ENCODE measurements at regions of chr2 and their contacts with region 1.

Region 1: DNA sequence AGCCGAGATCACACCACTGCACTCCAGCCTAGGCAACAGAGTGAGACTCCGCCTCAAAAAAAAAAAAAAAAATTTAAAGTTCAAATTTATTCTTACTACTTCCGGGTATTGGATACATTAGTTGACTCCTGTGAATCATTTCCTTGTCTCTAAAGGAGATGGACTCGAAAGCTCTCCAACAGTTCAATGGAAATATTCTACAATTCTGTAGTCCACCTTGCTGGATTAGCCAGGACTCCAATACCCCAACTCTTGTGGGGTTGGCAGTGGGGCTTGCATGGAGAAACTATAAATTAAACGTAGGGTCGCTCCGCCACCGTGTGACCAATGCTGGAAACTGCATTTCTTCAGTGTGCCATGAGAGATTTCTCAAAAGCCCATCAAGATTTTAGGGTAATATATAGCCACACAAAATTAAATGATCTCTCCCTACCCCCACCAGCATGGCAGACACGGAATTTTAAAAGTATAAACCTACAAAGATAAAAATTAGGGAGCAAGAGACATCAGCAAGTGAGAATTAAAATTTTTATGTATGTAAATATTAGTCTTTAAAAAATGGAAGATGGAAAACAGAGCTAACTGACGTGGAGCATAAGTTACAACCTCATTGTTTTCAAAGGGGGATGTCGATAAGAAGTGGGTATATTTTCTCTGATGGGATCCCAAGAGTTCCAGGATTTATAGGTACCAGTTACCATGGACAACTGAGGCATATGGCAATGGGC is 27.8 kb upstream of the GAREM2 start:
- DNase-seq: peak; percentile 82
- H3K4me3 ChIP-seq: no peak overlapping the region
- H3K27ac ChIP-seq: peak overlapping the region; percentile 77
- H3K4me1 ChIP-seq: peaks cover 8% of the 10 kb centered on the region
- H3K27me3 ChIP-seq: no peaks in the 10 kb centered on the region
- CTCF ChIP-seq: peak; percentile 75

Region 2: GRCh38 chr2:25851740-25852503 is 293.2 kb before region 1 on chr2:
- intact Hi-C with region 1: loop called (anchors 10 kb)
- DNase-seq: peak; percentile 29
- H3K4me3 ChIP-seq: no peak overlapping the region
- H3K27ac ChIP-seq: no peak overlapping the region
- H3K4me1 ChIP-seq: no peaks in the 10 kb centered on the region
- H3K27me3 ChIP-seq: no peaks in the 10 kb centered on the region
- CTCF ChIP-seq: peak; percentile 67

Region 3: DNA sequence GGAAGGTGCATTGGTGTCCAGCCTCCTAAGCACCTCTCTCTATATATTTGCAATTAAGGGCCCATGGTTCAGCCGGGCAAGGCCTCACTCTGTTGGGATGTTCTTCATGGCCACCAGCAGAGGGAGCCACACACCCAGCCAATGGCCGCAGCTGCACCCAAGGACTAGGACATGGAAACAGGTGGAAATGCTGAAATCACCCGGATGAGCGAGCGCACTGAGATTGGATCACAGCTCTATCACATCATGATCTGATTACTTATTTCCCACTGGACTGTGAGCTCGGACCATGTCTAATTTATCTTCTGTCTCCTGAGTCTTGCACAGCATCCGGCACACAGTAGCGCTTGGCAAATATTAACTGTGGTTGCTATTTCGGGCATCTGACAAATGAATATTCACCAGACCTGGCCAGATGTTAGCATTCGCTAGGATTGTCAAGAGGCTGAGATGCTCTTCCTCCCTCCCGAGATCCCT is 194.0 kb before region 1 on chr2:
- intact Hi-C with region 1: loop called (anchors 5 kb)
- DNase-seq: peak; percentile 82
- H3K4me3 ChIP-seq: no peak overlapping the region
- H3K27ac ChIP-seq: no peak overlapping the region
- H3K4me1 ChIP-seq: no peaks in the 10 kb centered on the region
- H3K27me3 ChIP-seq: no peaks in the 10 kb centered on the region
- CTCF ChIP-seq: peak; percentile 83

Region 4: GRCh38 chr2:25989154-25989553 is 156.0 kb before region 1 on chr2:
- intact Hi-C with region 1: loop called (anchors 2 kb)
- DNase-seq: no peak
- H3K4me3 ChIP-seq: no peak overlapping the region
- H3K27ac ChIP-seq: no peak overlapping the region
- H3K4me1 ChIP-seq: no peaks in the 10 kb centered on the region
- H3K27me3 ChIP-seq: no peaks in the 10 kb centered on the region
- CTCF ChIP-seq: no peak

Region 5: GRCh38 chr2:26088032-26088643 is 57.0 kb before region 1 on chr2:
- intact Hi-C with region 1: loop called (anchors 10 kb)
- DNase-seq: no peak
- H3K4me3 ChIP-seq: no peak overlapping the region
- H3K27ac ChIP-seq: no peak overlapping the region
- H3K4me1 ChIP-seq: no peaks in the 10 kb centered on the region
- H3K27me3 ChIP-seq: no peaks in the 10 kb centered on the region
- CTCF ChIP-seq: peak; percentile 79